Ascending aorta (tissue), 2 donors: ENCODE measurements at regions of chr9 and their contacts with region 1.

Region 1: DNA sequence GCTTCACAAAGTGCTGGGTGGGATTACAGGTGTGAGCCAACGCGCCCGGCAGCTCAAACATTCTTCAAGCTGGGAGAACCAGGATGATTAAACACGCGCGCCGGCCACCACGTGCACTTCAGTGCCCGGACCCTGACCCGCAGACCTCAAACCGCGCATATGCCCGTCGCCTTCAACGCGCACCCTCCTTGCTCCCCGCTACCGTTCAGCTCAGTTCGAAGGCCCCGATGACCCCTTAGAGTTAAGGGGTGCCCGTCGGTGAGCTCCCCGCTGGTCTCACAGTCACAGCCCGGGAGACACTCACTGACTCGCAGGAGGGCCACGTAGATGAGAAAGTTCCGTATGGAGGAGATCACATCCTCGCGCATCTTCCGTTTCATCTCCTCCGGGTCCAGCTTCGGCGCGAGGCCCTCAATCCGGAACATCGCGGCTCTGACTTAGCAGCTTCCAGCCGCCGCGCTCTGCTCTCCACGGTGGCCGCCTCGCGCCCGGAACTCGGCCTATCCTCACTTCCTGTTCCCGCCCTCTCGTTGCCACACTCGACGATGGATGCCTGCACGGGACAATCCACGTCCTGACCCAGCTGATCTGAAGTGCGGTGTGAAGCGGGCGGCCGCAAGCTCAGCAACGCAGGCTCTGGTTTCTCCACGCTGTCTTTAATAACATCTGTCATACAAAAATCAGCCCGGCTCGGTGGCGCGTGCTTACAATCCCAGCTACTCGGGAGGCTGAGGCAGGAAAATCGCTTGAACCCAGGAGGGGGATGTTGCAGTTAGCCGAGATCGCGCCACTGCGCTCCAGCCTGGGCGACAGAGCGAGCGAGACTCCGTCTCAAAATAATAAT is at the start of gene TOMM5:
- DNase-seq: peak; percentile 76 to 96
- H3K4me3 ChIP-seq: peak within 1 kb of the TSS; percentile 83 to 90
- H3K27ac ChIP-seq: peak within 1 kb of the TSS; percentile 67 to 77
- H3K4me1 ChIP-seq: peaks cover 5 to 9% of the 10 kb centered on the region in 2 donors
- H3K27me3 ChIP-seq: no peaks in the 10 kb centered on the region
- CTCF ChIP-seq: no peak
- total RNA-seq, gene TOMM5: 64.5 TPM

Region 2: GRCh38 chr9:37027582-37028419 is 564.5 kb before region 1 on chr9:
- intact Hi-C with region 1: no loop called
- DNase-seq: peak in 1 of 2 donors; percentile 83
- H3K4me3 ChIP-seq: peak overlapping the region; percentile 54 to 62
- H3K27ac ChIP-seq: no peak overlapping the region
- H3K4me1 ChIP-seq: peaks cover 21 to 37% of the 10 kb centered on the region in 2 donors
- H3K27me3 ChIP-seq: peaks cover 74% of the 10 kb centered on the region
- CTCF ChIP-seq: no peak

Region 3: DNA sequence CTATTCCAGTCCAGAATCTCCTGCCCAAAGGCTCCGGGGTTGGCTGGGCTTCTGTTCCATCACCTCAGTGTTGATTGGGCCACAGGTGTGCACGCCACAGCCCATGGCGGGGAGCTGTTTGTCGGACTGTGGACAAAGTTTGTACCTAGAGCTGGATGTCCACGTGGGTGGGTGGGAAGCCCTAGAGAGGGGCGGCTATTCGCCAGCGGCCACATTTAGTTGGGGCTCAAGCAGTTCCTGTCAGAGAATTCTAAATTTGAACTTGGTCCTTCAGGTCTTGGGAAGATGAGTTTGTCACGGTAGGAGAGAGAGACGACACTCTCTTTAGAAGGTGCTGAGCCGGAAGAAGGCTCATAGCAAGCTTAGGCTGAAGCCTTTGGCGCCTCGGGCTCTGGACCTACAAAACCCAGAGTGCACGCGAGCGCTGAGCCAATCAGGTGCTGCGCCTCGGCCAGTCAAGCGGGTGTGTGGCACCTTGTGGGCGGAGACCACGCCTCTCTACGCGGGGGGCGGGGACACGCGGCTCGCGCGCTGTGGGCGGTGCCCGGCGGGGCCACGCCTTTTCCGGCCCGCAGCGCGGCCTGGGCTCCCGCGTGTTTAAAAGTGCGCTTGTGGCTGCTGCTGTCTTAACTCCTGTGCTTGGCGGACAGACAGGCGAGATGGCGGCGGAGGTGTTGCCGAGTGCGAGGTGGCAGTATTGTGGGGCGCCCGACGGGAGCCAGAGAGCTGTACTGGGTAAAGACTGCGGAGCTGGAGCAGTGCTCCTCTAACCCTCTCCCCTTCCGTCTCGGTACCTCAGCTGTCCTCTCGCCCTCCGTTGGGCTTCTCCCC is 106.7 kb before region 1 on chr9 and contains the start of gene POLR1E:
- intact Hi-C with region 1: loop called (anchors 2 kb)
- DNase-seq: peak; percentile 84 to 97
- H3K4me3 ChIP-seq: peak within 1 kb of the TSS; percentile 53 to 88
- H3K27ac ChIP-seq: peak within 1 kb of the TSS; percentile 88 to 94
- H3K4me1 ChIP-seq: peaks cover 12 to 19% of the 10 kb centered on the region in 2 donors
- H3K27me3 ChIP-seq: no peaks in the 10 kb centered on the region
- CTCF ChIP-seq: no peak
- total RNA-seq, gene POLR1E: 18.0 TPM

Region 4: DNA sequence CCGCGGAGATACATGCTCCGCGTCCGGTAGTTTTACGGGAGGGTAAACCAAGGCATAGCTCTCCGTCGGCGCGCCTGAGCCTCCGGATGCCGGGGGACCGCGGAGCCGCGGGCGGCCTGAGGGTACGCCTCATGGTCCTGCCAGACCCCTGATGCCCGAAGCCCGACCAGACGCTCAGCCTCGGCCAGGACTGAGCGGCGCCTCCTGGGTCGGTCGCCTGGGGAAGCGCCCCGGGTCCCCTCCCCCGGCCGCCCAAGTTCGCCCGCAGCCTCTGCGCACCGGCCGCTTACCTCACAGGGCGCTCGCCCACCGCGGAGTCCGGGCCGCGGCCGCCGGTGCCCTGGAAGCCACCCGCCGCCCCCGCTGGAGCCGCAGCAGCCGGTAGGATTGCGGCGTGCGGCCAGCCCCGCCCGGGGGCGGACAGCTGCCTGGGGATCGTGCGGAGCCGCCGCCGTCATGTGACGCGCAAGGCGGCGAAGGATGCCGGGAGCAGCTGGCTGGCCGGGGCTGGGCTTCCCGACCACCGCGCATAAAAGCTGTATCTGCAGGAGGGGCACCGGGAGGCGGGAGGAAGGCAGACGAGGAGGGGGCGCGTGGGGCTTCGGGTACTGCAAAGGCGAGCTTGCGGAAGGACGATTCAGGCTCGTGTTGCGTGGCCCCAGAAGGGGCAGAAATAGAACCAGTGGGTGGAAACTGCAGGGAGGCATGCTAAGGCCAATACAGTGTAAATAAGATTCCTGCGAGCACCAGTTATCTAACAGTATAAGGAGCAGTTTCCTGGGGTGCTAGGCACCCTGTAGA is 16.2 kb before region 1 on chr9 and contains the start of gene FBXO10:
- intact Hi-C with region 1: loop called (anchors 2 kb)
- DNase-seq: peak in 1 of 2 donors; percentile 82
- H3K4me3 ChIP-seq: peak within 1 kb of the TSS; percentile 69 to 79
- H3K27ac ChIP-seq: peak within 1 kb of the TSS; percentile 76 to 78
- H3K4me1 ChIP-seq: peaks cover 0 to 7% of the 10 kb centered on the region in 2 donors
- H3K27me3 ChIP-seq: no peaks in the 10 kb centered on the region
- CTCF ChIP-seq: no peak
- total RNA-seq, gene FBXO10: 8.2 TPM

Region 5: GRCh38 chr9:37784616-37785483 is 192.5 kb after region 1 on chr9 and contains the start of gene EXOSC3:
- intact Hi-C with region 1: loop called (anchors 10 kb)
- DNase-seq: peak; percentile 23 to 93
- H3K4me3 ChIP-seq: peak within 1 kb of the TSS; percentile 89 to 90
- H3K27ac ChIP-seq: peak within 1 kb of the TSS; percentile 78 to 81
- H3K4me1 ChIP-seq: peaks cover 0 to 10% of the 10 kb centered on the region in 2 donors
- H3K27me3 ChIP-seq: no peaks in the 10 kb centered on the region
- CTCF ChIP-seq: peak in 1 of 3 experiments; percentile 13
- total RNA-seq, gene EXOSC3: 9.0 TPM

Region 6: DNA sequence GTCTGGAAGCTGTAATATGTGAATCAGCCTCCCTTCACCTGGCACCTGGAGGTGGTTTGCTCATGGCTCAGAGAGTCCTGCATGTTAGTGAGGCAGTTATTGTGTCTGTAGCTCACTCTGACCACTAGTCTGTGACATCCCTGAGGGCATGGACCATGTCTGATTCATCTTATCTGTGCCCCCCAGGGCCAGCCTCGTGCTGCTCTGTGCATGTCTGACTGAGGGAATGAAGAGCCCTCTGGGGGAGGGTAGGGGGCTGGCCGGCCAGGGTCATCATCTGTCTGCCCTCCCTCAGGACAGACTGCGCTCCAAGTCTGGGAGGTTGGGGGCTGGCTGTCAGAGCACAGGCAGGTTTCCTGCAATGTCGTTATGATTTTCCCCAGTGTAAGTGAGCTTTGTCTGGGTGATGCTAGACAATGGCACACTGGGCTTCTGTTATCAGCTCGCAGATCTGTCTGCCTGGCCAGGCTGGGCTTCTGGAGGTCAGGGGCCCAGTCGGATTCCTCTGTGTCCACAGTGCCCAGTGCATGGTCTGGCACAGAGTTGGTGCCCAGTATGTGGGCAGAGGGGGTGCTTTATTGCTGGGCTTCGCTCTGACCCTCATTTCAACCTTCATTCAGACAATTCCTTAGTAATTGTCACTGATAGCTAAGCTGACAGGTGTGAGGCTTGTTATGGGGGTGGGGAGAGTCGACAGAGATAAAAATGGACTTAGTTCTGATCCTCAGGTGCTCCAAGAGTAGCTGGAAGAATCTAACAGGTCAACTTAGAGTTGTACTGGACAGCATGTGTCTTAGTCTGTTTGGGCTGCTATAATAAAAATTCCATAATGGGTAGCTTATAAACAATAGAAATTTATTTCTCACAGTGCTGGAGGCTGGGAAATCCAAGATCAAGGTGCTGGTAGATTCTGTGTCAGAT is 562.4 kb after region 1 on chr9:
- intact Hi-C with region 1: no loop called
- DNase-seq: no peak
- H3K4me3 ChIP-seq: no peak overlapping the region
- H3K27ac ChIP-seq: no peak overlapping the region
- H3K4me1 ChIP-seq: no peaks in the 10 kb centered on the region
- H3K27me3 ChIP-seq: no peaks in the 10 kb centered on the region
- CTCF ChIP-seq: no peak

Region 7: DNA sequence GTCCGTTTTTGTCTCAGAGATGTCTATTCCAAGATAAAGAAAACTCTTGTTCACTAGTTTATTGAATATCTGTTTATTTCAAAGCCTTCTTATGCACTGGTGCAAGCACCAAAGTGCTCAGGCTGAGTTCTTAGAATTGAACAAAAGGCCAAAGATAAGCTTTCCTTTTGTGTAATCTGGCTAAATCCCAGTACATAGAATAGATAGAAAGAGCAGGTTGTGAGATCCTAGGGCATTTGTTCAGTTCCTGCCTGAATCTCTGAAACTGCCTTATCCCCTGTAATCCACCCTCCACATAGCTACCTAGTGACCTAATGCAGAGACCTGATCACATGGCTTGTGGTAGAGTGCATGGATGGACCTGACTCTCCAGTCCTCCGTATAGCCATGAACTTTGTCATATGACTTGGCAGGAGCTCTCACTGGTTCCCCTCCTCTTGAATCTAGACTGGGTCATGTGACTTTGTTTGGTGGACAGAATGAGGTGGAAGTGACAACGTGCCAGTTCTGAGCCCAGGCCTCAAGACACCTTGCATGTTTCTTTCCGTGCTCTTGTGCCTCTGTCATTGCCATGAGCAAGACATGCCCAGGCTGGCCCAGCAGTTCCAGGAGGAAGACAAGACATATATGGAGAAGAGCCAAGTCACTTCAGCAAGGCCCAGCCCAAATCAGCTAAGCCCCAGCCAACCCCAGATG is 616.0 kb after region 1 on chr9:
- intact Hi-C with region 1: no loop called
- DNase-seq: no peak
- H3K4me3 ChIP-seq: no peak overlapping the region
- H3K27ac ChIP-seq: no peak overlapping the region
- H3K4me1 ChIP-seq: no peaks in the 10 kb centered on the region
- H3K27me3 ChIP-seq: no peaks in the 10 kb centered on the region
- CTCF ChIP-seq: no peak